Activated CD8-positive, alpha-beta memory T cell treated with anti-CD3 and anti-CD28 coated beads, Interleukin-2, amount 10 ng/mL, durations not matched to agents 7 days and 5 days (primary cell): ENCODE measurements at regions of chr7 and their contacts with region 1.

Region 1: DNA sequence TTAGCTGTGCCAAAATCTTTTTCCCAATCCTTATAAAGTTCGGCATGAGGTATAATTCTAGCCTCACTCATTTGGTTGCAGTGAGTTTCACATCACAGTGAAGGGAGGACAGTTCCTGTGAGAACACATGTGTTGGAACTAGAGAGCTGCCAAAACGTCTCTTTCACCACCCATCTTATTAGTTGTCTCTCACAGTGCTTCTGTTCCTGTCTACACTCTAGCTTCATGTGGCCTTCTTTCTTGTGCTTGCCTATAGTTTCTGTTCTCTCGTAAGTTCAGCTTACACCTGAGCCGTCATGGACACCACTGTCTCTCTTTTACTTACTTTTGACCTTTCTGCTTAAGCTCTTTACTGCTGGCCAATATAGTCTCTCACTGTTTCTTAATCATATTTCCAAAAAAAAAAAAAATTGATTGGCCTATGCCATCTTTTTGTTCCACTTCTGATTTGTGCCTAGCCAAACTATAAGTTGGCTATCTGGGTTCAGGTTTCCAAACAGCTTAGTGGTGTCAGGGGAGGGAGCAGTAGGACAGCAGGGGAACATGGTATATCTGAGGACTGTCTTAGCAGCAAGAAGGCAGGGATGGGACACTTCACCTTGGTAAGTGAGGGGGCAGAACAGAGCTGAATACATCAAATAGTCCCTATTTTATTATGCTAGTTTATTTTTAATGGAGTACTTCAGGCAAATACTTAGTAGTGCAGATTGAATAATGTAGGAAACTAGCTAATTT is 38.0 kb downstream of the ZNRF2 start:
- DNase-seq: peak; percentile 45
- ATAC-seq: peak; percentile 73
- H3K4me3 Mint-ChIP-seq: peak overlapping the region; percentile 73
- H3K27ac Mint-ChIP-seq: peak overlapping the region; percentile 99
- H3K4me1 Mint-ChIP-seq: peaks cover 62% of the 10 kb centered on the region
- H3K27me3 Mint-ChIP-seq: no peaks in the 10 kb centered on the region

Region 2: GRCh38 chr7:30284298-30285066 is 38.0 kb before region 1 on chr7 and contains the start of gene ZNRF2:
- CTCF ChIA-PET with region 1: interaction called, 12 read pairs
- DNase-seq: peak; percentile 100
- ATAC-seq: peak; percentile 89
- H3K4me3 Mint-ChIP-seq: peak within 1 kb of the TSS; percentile 77
- H3K27ac Mint-ChIP-seq: peak within 1 kb of the TSS; percentile 88
- H3K4me1 Mint-ChIP-seq: peaks cover 41% of the 10 kb centered on the region
- H3K27me3 Mint-ChIP-seq: no peaks in the 10 kb centered on the region
- total RNA-seq, gene ZNRF2: 14.0 to 21.3 TPM

Region 3: DNA sequence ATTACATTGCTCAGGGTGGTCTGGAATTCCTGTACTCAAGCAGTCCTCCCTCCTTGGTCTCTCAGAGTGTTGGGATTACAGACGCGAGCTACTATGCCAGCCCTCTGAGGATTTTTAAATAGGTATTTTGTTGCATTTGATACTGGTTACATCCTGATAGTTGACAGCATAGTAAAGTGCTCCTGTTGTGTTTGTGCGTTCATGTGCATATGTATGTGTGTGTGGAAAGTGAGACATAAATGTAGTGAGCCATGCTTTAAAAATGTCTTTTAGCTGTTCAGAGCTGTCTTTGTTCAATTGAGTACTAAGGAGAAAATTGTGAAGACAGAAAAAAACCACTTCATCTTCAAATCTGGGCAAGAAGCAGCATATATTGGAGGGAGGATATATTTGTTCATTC is 10.3 kb before region 1 on chr7:
- CTCF ChIA-PET with region 1: interaction called, 18 read pairs
- DNase-seq: no peak
- ATAC-seq: no peak
- H3K4me3 Mint-ChIP-seq: no peak overlapping the region
- H3K27ac Mint-ChIP-seq: no peak overlapping the region
- H3K4me1 Mint-ChIP-seq: peaks cover 34% of the 10 kb centered on the region
- H3K27me3 Mint-ChIP-seq: no peaks in the 10 kb centered on the region

Region 4: GRCh38 chr7:30445770-30446169 is 123.3 kb after region 1 on chr7:
- CTCF ChIA-PET with region 1: no interaction called
- DNase-seq: peak; percentile 86
- ATAC-seq: peak; percentile 97
- H3K4me3 Mint-ChIP-seq: no peak overlapping the region
- H3K27ac Mint-ChIP-seq: peak overlapping the region; percentile 22
- H3K4me1 Mint-ChIP-seq: peaks cover 4% of the 10 kb centered on the region
- H3K27me3 Mint-ChIP-seq: no peaks in the 10 kb centered on the region